Activated naive CD8-positive, alpha-beta T cell treated with anti-CD3 and anti-CD28 coated beads, Interleukin-2, amount 10 ng/mL, durations not matched to agents 7 days and 5 days (primary cell): ENCODE measurements at regions of chr1 and their contacts with region 1.

Region 1: DNA sequence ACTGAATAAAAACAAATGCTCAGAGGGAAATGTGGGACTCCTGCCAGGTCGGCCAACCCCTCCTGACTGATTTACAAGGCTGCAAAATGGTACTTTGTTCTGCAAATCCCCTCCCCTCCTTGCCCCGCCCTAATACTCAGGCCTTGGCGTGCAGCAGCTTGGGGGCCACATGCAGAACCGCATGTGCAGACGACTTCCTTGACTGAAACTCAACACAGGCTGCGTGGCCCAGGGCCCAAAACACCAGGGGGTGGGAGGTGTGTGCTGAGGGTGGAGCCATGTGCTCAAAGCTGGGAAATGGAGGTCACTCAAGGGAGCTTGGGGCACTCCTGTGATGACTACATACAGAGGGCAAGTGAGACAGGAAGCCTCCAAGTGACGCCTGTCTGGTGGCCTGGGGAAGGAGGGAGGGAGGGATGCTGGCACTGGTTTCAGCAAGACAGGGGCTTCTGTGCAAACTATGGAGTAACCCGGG is 87.2 kb downstream of the MRPL37 start:
- DNase-seq: peak; percentile 82
- ATAC-seq: peak; percentile 83
- H3K4me3 Mint-ChIP-seq: peak overlapping the region; percentile 84
- H3K27ac Mint-ChIP-seq: peak overlapping the region; percentile 95
- H3K4me1 Mint-ChIP-seq: peaks cover 74% of the 10 kb centered on the region
- H3K27me3 Mint-ChIP-seq: no peaks in the 10 kb centered on the region

Region 2: GRCh38 chr1:54199765-54200518 is 87.3 kb before region 1 on chr1 and contains the starts of genes CYB5RL and MRPL37:
- POLR2A ChIA-PET with region 1: interaction called, 16 read pairs
- DNase-seq: peak; percentile 86
- ATAC-seq: peak; percentile 97
- H3K4me3 Mint-ChIP-seq: peak within 1 kb of the TSS; percentile 90
- H3K27ac Mint-ChIP-seq: peak within 1 kb of the TSS; percentile 58
- H3K4me1 Mint-ChIP-seq: peaks cover 27% of the 10 kb centered on the region
- H3K27me3 Mint-ChIP-seq: no peaks in the 10 kb centered on the region
- total RNA-seq, gene CYB5RL: 11.6 to 13.3 TPM
- total RNA-seq, gene MRPL37: 71.8 to 81.6 TPM

Region 3: DNA sequence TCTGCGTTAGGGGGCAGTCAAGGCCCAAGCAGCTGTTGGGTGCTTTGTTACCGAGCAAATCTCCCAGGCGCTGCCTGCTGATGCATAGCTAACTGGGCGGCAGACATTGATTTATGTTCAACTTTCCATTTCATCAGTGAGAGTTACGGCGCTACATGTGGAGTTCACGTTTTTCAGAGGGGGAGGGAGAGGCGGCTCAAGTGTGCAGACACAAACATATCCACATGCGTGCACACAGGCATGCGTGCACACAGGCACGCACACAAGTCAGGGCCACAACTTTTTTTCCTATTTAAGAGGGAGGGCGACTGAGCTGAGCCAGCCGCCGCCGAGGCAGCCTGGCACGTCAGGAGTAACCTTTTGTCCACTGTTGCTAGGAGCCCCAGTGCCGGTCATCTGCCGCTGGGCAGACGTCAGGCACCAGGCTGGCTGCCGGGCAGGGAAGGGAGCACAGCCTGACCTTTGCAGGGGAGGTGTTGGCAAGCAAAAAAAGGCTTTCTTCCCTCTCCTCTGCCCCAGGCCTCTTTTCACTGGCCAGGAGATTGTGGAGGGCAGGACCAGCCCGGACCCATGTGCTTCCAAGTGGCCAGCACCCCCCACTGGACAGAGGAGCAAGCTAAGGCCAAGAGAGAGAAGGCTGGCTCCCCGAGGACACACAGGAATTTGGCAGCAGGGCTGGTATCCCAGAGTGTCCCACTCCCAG is 14.0 kb before region 1 on chr1:
- POLR2A ChIA-PET with region 1: interaction called, 11 read pairs
- DNase-seq: no peak
- ATAC-seq: no peak
- H3K4me3 Mint-ChIP-seq: no peak overlapping the region
- H3K27ac Mint-ChIP-seq: peak overlapping the region; percentile 10
- H3K4me1 Mint-ChIP-seq: peaks cover 38% of the 10 kb centered on the region
- H3K27me3 Mint-ChIP-seq: no peaks in the 10 kb centered on the region

Region 4: DNA sequence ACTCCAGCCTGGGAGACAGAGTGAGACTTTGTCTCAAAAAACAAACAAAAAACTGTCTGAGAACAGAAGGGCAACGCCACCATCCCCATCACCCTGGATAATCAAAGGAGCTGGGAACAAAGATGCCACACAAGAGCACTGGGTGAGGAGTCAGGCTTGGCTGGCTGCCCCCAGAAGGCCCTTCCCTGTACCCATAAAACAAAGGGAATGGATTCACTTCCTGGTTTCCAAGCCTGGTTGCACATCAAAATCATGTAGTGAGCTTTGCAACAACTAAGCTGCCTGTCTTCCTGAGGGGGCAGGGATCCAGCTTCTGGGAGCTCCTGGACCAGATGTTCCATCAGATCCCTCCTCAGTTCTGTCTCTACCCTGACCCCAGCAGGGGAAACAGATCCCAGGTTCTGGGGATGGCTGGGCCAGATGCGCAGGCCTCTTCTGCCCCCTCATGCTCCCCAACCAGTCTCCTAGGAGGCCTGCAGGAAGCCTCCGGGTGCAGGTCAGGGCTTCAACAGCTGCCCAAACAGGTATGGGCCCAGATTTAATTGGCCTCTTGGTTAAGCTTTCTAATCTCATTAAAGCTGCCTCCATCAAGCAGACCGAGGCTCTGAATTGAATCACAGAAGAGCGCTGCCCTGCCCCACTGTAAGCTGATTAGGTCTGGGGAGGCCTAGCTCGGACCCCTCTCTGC is 10.5 kb after region 1 on chr1:
- POLR2A ChIA-PET with region 1: interaction called, 10 read pairs
- DNase-seq: no peak
- ATAC-seq: no peak
- H3K4me3 Mint-ChIP-seq: no peak overlapping the region
- H3K27ac Mint-ChIP-seq: peak overlapping the region; percentile 49
- H3K4me1 Mint-ChIP-seq: peaks cover 45% of the 10 kb centered on the region
- H3K27me3 Mint-ChIP-seq: no peaks in the 10 kb centered on the region

Region 5: GRCh38 chr1:54310439-54311328 is 23.5 kb after region 1 on chr1:
- POLR2A ChIA-PET with region 1: interaction called, 19 read pairs
- DNase-seq: no peak
- ATAC-seq: peak; percentile 62
- H3K4me3 Mint-ChIP-seq: peak overlapping the region; percentile 70
- H3K27ac Mint-ChIP-seq: peak overlapping the region; percentile 91
- H3K4me1 Mint-ChIP-seq: peaks cover 64% of the 10 kb centered on the region
- H3K27me3 Mint-ChIP-seq: no peaks in the 10 kb centered on the region

Region 6: DNA sequence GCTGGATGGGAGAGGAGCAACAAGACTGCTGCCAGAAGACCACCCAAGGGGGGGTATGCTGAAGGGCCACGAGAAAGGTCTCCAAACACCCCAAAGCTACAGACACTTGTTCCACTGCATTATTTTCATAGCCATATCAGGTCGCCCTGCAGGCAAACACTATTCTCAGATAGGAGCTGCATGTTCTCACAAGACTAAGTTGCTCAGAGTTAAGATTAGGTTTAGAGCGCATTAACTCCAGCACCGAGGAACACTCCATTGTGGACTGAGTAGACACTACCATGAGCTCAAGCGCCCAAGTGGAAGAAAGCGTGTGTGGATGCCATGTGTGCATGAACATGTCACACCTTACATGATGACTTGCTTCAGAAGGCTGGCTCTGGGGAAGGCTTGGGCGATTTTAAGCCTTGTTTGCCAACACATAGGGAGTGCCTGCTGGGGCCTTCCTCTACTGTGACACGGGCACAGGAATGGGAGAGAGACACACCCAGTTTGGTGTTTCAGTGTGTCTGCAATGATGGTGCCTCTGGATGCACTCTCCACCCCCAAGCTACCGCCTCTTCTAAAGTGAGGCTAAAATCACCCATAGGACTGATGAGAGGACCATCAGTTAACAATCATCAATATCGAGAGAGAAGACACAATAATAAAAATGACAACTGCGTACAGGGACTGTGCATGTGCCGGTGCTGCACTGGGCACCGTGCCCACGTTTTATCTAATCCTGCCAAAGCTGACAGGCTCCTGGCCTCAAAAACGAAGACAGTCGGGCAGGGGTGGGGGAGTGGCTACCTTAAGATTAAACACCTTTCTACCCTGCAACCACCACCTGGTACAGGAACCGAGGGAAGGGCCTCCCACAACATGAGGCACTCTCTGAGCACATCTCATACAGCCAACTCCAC is 84.1 kb after region 1 on chr1:
- POLR2A ChIA-PET with region 1: no interaction called
- DNase-seq: no peak
- ATAC-seq: no peak
- H3K4me3 Mint-ChIP-seq: no peak overlapping the region
- H3K27ac Mint-ChIP-seq: peak overlapping the region; percentile 71
- H3K4me1 Mint-ChIP-seq: peaks cover 48% of the 10 kb centered on the region
- H3K27me3 Mint-ChIP-seq: no peaks in the 10 kb centered on the region

Region 7: DNA sequence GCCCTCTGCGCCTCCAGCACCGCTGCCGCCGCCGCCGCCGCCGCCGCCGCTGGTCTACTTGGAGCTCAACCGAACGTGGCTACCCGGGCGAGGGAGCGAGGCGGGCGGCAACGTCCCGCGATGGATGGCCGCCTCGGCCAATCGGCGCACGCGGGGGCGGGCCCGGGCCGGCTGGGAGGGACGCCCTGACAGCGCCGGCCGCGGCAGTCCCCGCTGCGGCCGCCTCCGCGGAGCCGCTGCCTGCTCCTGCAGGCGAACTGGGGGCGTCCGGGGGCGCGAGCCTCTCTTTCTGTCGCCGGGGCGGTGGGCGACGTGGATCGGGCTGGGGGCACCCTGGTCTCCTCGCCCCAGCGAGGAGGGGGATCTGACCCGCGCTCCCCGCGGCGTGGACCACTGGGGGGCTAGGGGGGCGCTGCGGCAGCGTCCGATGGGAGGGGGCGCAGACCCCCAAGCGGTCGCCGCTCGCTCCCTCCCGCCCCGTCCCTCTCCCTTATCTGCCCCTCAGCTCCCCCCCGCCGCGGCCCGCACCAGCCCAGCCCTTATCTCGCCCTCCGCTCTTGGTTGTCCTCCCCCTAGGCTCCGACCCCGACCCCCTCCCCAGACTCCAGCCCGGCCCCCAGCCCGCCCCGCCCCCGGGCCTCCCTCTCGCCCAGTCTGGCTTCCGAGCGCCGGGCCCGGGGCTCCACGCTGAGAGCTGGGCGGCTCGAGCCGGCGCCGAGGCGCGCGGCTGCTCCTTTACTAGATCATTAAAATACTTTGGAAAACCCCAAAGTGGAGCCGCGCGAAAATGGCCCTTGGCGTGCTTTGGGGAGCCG is 119.3 kb after region 1 on chr1 and contains the start of gene SSBP3:
- POLR2A ChIA-PET with region 1: interaction called, 92 read pairs
- DNase-seq: peak; percentile 97
- ATAC-seq: peak; percentile 89
- H3K4me3 Mint-ChIP-seq: peak within 1 kb of the TSS; percentile 91
- H3K27ac Mint-ChIP-seq: peak within 1 kb of the TSS; percentile 84
- H3K4me1 Mint-ChIP-seq: peaks cover 65% of the 10 kb centered on the region
- H3K27me3 Mint-ChIP-seq: no peaks in the 10 kb centered on the region
- total RNA-seq, gene SSBP3: 109 to 126 TPM

Region 8: DNA sequence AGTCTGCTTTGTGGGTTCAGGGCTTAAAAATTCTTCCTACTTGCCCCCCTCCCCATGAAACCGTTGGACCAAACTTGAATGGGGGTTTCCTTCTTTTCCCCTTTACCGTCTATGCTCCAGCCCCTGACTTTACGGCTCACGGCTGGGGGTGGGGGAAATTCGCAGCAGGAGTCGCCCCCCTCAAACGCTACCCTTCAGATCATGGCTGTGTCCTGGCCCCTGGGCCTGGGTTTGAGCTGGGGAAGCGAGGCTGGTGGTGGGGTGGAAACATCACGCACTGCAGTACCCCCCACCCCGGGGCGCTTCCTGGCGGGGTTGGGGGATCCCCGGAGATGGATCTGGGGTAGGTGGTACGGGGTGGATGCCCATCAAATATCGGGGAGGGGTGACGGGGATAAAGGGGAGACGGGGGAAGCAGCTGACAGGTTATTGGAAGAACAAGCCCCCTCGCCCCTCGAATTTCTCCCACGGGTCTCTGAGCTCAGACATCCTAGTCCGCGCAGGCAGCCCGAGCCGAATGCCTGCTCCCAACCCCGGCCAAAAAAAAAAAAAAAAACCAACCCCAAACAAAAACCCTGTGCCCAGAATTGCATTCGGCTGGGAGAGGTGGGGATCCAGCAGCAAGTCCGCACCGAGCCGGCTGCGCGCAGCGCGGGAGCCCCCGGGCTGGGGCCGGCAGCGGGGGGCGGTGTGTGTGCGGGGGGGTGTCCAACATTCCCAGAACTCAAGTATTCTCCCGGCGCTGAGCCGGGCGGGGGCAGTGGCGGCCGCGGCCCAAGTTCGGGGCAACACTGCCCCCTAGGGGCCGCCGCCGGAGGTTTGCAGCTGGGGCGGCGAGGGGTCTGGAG is 201.8 kb after region 1 on chr1:
- POLR2A ChIA-PET with region 1: interaction called, 19 read pairs
- DNase-seq: peak; percentile 89
- ATAC-seq: peak; percentile 69
- H3K4me3 Mint-ChIP-seq: peak overlapping the region; percentile 86
- H3K27ac Mint-ChIP-seq: peak overlapping the region; percentile 81
- H3K4me1 Mint-ChIP-seq: peaks cover 27% of the 10 kb centered on the region
- H3K27me3 Mint-ChIP-seq: peaks cover 24% of the 10 kb centered on the region